Thyroid gland (tissue), 4 donors: ENCODE measurements at regions of chr4 and their contacts with region 1.

Region 1: DNA sequence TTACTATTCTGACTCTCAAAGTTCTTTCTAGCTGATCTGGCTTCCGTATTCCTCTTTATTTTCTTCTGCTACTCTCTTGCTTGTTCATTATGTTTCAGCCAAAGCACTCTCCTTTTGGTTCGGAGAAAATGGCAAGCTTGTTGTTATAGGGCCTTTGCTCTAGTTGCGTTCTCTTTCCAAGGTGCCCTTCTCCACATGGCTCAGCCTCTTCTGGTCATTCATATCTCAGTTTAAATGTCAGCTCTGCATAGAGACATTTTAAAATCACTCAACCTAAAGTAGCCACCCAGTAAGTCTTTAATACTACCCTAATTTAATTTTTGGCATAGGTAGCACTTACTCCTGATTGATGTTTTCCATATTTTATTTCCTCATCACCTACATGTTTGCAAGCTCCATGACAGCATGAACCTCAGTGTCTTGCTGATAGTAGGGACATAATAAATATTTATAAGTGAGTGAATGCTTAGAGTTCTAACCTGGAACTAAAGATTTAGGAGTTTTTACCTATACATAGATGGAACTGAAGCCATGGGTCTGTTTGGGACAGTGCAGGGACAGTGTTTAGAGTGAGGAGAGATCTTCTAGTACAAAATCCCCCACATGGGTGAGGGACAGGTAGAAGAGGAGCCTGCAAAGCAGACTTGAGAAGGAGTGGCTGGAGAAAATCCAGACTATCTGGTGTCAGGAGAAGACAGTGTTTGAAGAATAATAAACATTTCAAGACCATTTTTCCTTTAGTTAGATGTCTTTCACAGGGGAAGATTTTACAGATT is 17.9 kb downstream of the SLC30A9 start:
- DNase-seq: no peak
- H3K4me3 ChIP-seq: no peak overlapping the region
- H3K27ac ChIP-seq: no peak overlapping the region
- H3K4me1 ChIP-seq: no peaks in the 10 kb centered on the region
- H3K27me3 ChIP-seq: no peaks in the 10 kb centered on the region
- CTCF ChIP-seq: no peak
- POLR2A ChIP-seq: no peak

Region 2: GRCh38 chr4:40980318-40980883 is 1027.8 kb before region 1 on chr4:
- intact Hi-C with region 1: no loop called
- DNase-seq: peak in 1 of 2 donors; percentile 28
- H3K4me3 ChIP-seq: no peak overlapping the region
- H3K27ac ChIP-seq: no peak overlapping the region
- H3K4me1 ChIP-seq: peaks cover 13 to 26% of the 10 kb centered on the region in 2 donors
- H3K27me3 ChIP-seq: no peaks in the 10 kb centered on the region
- CTCF ChIP-seq: peak in 2 of 6 experiments; percentile 10 to 44
- POLR2A ChIP-seq: no peak

Region 3: GRCh38 chr4:42167709-42168108 is 159.5 kb after region 1 on chr4:
- intact Hi-C with region 1: no loop called
- DNase-seq: no peak
- H3K4me3 ChIP-seq: no peak overlapping the region
- H3K27ac ChIP-seq: no peak overlapping the region
- H3K4me1 ChIP-seq: no peaks in the 10 kb centered on the region
- H3K27me3 ChIP-seq: no peaks in the 10 kb centered on the region
- CTCF ChIP-seq: no peak
- POLR2A ChIP-seq: no peak

Region 4: GRCh38 chr4:42643685-42644084 is 635.5 kb after region 1 on chr4:
- intact Hi-C with region 1: loop called (anchors 10 kb)
- DNase-seq: no peak
- H3K4me3 ChIP-seq: no peak overlapping the region
- H3K27ac ChIP-seq: no peak overlapping the region
- H3K4me1 ChIP-seq: peaks cover 15 to 22% of the 10 kb centered on the region in 2 donors
- H3K27me3 ChIP-seq: no peaks in the 10 kb centered on the region
- CTCF ChIP-seq: no peak
- POLR2A ChIP-seq: no peak

Region 5: DNA sequence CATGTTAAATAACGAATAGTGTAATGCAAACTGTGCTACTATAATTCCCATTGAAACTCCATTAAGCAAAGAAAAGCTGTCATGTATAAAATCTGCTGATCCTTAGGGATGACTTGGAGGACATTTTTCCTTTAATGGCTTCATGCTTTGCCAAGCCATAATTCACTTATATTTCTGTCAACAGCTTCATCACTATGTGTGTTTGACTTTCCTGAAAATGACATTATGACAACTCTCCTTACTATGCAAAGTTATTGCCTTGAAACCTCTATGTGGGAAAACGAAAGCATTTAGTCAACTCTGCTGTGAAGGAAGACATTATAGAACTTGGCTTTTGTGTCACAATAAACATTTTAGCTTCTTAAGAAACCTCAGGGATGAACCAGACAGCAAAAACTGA is 1094.8 kb after region 1 on chr4:
- intact Hi-C with region 1: no loop called
- DNase-seq: no peak
- H3K4me3 ChIP-seq: no peak overlapping the region
- H3K27ac ChIP-seq: no peak overlapping the region
- H3K4me1 ChIP-seq: no peaks in the 10 kb centered on the region
- H3K27me3 ChIP-seq: no peaks in the 10 kb centered on the region
- CTCF ChIP-seq: no peak
- POLR2A ChIP-seq: no peak